Activated CD4-positive, alpha-beta memory T cell treated with anti-CD3 and anti-CD28 coated beads, Interleukin-2, amount 10 ng/mL, durations not matched to agents 7 days and 5 days (primary cell): ENCODE measurements at regions of chr7 and their contacts with region 1.

Region 1: GRCh38 chr7:2698581-2699288 is 10.7 kb downstream of the AMZ1 start:
- DNase-seq: peak; percentile 84
- H3K4me3 Mint-ChIP-seq: peak overlapping the region; percentile 50
- H3K27ac Mint-ChIP-seq: peak overlapping the region; percentile 75
- H3K4me1 Mint-ChIP-seq: peaks cover 30% of the 10 kb centered on the region
- H3K27me3 Mint-ChIP-seq: peaks cover 9% of the 10 kb centered on the region

Region 2: DNA sequence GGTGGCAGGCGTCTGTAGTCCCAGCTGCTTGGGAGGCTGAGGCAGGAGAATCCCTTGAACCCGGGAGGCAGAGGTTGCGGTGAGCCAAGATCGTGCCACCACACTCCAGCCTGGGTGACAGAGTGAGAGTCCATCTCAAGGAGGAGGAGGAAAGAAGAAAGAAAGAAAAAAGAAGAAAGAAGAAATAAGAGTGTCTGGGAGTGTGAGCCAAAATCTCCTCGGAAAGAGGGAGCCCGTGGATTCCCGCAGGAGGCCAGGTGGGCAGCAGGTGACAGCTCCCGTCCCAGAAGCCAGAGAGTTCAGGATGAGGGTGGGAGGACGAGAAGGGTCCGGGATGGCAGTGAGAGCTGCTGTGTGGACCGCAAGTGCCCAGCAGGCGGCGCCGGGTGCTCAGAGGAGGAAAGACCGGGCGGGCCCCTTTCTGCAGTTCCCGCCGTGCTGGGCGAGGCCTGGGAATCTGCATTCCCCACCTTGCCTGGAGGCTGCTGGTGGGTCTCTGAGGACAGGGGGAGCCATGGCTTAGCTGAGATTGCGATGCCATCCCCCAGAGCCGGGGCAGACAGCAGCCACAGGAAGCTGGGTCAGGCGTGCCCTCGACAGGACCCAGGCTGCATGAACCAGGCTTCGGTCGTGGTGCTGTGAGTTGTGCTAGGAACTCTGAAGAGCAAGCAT is 27.9 kb before region 1 on chr7:
- CTCF ChIA-PET with region 1: interaction called, 22 read pairs
- POLR2A ChIA-PET with region 1: interaction called, 5 read pairs
- DNase-seq: peak; percentile 71
- H3K4me3 Mint-ChIP-seq: no peak overlapping the region
- H3K27ac Mint-ChIP-seq: no peak overlapping the region
- H3K4me1 Mint-ChIP-seq: peaks cover 8% of the 10 kb centered on the region
- H3K27me3 Mint-ChIP-seq: peaks cover 32% of the 10 kb centered on the region

Region 3: GRCh38 chr7:2720582-2721491 is 22.1 kb after region 1 on chr7:
- CTCF ChIA-PET with region 1: interaction called, 10 read pairs
- POLR2A ChIA-PET with region 1: interaction called, 8 read pairs
- DNase-seq: peak; percentile 85
- H3K4me3 Mint-ChIP-seq: no peak overlapping the region
- H3K27ac Mint-ChIP-seq: peak overlapping the region; percentile 44
- H3K4me1 Mint-ChIP-seq: peaks cover 48% of the 10 kb centered on the region
- H3K27me3 Mint-ChIP-seq: no peaks in the 10 kb centered on the region